Common myeloid progenitor, CD34-positive (primary cell): ENCODE measurements at regions of chr16 and their contacts with region 1.

Region 1: GRCh38 chr16:69273009-69273408 is 38.1 kb upstream of the VPS4A start:
- DNase-seq: no peak
- H3K4me3 ChIP-seq: no peak overlapping the region
- H3K27ac ChIP-seq: no peak overlapping the region
- H3K4me1 ChIP-seq: peaks cover 0 to 11% (median 6%) of the 10 kb centered on the region in 4 experiments
- H3K27me3 ChIP-seq: no peaks in the 10 kb centered on the region

Region 2: DNA sequence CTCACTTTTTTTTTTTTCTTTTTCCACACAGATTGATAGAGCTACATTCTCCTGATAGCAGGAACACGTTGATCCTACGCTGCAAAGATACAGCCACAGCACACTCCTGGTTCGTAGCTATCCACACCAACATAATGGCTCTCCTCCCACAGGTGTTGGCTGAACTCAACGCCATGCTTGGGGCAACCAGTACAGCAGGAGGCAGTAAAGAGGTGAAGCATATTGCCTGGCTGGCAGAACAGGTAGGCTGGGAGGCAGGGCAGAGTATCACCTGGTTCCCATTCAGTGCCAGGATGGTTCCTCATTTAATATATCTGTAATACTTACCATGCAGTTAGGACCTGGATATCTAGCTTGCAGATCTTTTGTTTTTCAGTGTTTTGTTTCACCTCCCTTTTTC is 13.0 kb before region 1 on chr16:
- CTCF ChIA-PET with region 1: interaction called, 11 read pairs
- POLR2A ChIA-PET with region 1: interaction called, 6 read pairs
- DNase-seq: no peak
- H3K4me3 ChIP-seq: no peak overlapping the region
- H3K27ac ChIP-seq: no peak overlapping the region
- H3K4me1 ChIP-seq: peaks cover 0 to 2% (median 0%) of the 10 kb centered on the region in 4 experiments
- H3K27me3 ChIP-seq: no peaks in the 10 kb centered on the region